GM10248 (cell line): ENCODE measurements at regions of chr13 and their contacts with region 1.

Region 1: GRCh38 chr13:33542283-33543088 is 256.9 kb upstream of the STARD13 start:
- DNase-seq: peak; percentile 92
- CTCF ChIP-seq: peak; percentile 78

Region 2: DNA sequence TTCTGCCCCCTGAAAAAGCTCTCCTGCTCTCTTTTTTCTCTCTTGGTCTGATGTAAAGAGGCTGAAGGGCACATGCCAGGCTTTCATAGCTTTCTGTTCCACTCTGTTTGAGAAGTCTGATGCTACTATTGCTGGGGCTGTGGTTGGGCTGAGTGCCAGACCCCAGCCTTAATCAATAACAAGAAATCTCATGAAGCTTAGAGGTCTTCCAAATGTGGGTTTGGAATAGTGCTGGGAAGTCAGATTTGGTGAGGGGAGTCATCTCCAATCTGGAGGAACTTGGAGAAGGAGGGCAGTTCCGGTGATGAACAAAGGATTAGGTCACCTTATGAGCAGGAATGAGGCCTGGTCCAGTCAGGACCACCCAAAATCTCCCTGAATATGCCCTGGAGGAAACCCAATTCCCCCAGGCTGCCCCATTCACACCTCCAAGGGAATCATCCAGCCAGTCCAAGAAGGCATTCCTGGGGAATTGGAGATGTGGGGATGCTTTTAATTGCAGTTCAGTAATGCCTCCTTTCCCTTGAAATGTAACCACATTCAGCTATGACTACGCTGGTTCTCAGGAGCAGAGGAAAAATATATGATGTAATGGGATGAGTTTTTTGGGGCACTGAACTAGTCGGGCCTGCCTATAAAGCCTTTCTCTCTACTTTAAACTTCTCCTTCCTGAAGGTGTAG is 358.9 kb before region 1 on chr13:
- CTCF ChIA-PET with region 1: interaction called, 13 read pairs
- POLR2A ChIA-PET with region 1: no interaction called
- DNase-seq: no peak
- CTCF ChIP-seq: no peak

Region 3: DNA sequence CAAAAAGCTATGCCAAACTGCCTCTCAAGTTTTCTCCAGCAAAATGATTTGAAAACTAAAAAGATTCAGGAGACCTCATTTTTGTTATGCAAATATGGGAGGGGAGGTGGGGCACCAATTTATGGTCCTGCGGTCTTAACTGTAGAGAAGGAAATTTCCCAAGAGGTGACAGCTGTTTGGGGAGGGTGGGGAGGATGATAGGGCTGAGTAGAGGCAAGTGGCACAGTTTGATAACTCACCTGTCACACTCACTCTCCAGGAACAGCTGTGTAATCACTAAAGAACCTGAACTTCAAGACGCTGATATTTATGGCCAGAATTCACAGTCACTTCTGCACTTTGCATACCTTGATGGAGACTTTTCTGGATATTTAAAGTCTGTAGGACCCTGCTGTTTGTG is 24.0 kb before region 1 on chr13:
- CTCF ChIA-PET with region 1: no interaction called
- POLR2A ChIA-PET with region 1: no interaction called
- DNase-seq: no peak
- CTCF ChIP-seq: no peak

Region 4: GRCh38 chr13:33554919-33555791 is 12.7 kb after region 1 on chr13:
- CTCF ChIA-PET with region 1: interaction called, 16 read pairs
- POLR2A ChIA-PET with region 1: no interaction called
- DNase-seq: peak; percentile 37
- CTCF ChIP-seq: no peak

Region 5: GRCh38 chr13:33678906-33679657 is 136.6 kb after region 1 on chr13:
- CTCF ChIA-PET with region 1: interaction called, 18 read pairs
- POLR2A ChIA-PET with region 1: interaction called, 3 read pairs
- DNase-seq: peak; percentile 88
- CTCF ChIP-seq: no peak

Region 6: DNA sequence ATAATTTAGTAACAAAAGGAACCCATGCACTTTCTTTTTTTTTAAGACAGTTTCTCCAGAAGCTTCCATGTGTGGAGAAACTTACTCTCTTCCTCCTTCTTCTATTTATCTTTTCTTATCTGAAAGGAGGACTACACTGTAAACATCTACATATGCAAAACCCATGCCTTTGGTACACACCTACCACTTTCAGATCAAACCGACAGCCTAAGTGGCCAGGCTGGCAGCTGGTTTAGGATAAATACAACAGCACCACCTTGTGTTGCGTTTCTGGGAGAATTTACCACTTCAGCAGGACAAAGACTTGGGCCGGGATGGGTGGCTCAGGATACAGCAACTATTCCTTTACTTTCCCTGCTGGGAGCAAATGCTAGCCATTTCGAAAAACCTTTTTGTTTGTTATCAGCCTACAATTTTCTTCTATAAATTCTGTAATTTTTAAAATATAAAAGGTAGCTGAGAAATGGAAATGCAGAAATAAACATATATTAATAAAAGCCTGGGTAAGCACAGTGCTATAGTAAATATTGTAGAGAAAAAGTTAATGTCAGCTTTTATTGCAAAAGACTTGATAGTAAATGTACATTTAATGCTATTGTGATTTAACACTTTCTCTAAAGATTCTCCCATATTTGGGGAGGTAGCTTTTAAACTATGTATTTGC is 181.4 kb after region 1 on chr13:
- CTCF ChIA-PET with region 1: interaction called, 58 read pairs
- POLR2A ChIA-PET with region 1: interaction called, 6 read pairs
- DNase-seq: peak; percentile 56
- CTCF ChIP-seq: peak; percentile 76